Upper lobe of right lung (tissue), 1 donor: ENCODE measurements at regions of chr20 and their contacts with region 1.

Region 1: DNA sequence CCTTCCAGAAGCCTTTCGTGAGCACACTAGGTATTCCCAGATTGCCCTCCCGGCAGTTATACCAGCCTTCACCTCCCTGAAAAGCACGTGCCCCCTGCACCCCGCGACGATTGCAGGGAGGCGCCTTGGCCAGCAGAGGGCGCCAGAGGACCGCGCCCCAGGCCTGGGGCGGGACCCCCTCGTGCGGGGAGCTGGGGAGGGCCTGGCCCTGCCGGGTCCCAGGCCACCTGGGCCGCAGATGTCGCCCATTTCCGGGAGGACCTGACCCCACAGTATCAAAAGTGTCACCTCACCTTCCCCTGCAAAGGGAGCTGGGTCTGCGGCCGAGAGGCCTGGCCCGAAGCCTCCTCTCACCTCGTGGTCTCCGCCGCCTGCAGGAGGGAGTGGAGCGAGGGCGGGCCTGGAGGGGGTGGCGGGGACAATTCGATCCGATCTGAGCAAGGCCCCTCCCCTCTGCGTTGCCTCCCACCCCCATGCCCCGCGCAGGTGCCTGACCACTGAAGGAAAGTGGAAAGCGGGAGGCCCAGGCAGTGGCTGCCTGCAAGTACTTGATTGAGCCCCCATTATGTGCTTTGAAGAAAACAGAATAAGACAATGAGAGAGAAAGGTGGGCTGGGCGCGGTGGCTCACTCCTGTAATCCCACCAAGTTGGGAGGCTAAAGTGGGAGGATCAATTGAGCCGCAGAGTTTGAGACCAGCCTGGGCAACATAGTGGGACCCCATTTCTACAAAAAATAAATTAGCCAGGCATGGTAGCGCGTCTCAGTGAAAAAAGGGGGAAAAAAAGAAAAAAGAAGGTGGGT is 3.5 kb upstream of the SNAI1 start:
- DNase-seq: peak; percentile 74
- ATAC-seq: peak; percentile 76
- H3K4me3 ChIP-seq: no peak overlapping the region
- H3K27ac ChIP-seq: no peak overlapping the region
- H3K4me1 ChIP-seq: peaks cover 25% of the 10 kb centered on the region
- H3K27me3 ChIP-seq: no peaks in the 10 kb centered on the region
- CTCF ChIP-seq: peak; percentile 99

Region 2: GRCh38 chr20:50070991-50071888 is 92.0 kb after region 1 on chr20:
- intact Hi-C with region 1: loop called (anchors 5 kb)
- DNase-seq: peak; percentile 94
- ATAC-seq: peak; percentile 99
- H3K4me3 ChIP-seq: peak overlapping the region; percentile 36
- H3K27ac ChIP-seq: no peak overlapping the region
- H3K4me1 ChIP-seq: peaks cover 10% of the 10 kb centered on the region
- H3K27me3 ChIP-seq: no peaks in the 10 kb centered on the region
- CTCF ChIP-seq: peak; percentile 100

Region 3: GRCh38 chr20:50179507-50180016 is 200.3 kb after region 1 on chr20:
- intact Hi-C with region 1: loop called (anchors 5 kb)
- DNase-seq: no peak
- ATAC-seq: peak; percentile 48
- H3K4me3 ChIP-seq: no peak overlapping the region
- H3K27ac ChIP-seq: no peak overlapping the region
- H3K4me1 ChIP-seq: no peaks in the 10 kb centered on the region
- H3K27me3 ChIP-seq: no peaks in the 10 kb centered on the region
- CTCF ChIP-seq: peak; percentile 43